ENCODE measurements at regions of chr1 and their contacts with region 1.

Region 1: GRCh38 chr1:154974063-154974807 is at the start of gene CKS1B:
- DNase-seq: peak; percentile 100
- ATAC-seq: peak; percentile 83
- H3K4me3 ChIP-seq: peak within 1 kb of the TSS; percentile 67 to 84 (median 72)
- H3K27ac ChIP-seq: peak within 1 kb of the TSS; percentile 100
- H3K4me1 ChIP-seq: peaks cover 62% of the 10 kb centered on the region
- H3K27me3 ChIP-seq: no peaks in the 10 kb centered on the region; a peak in 1 of 5 replicates
- CTCF ChIP-seq: no peak
- EP300 ChIP-seq: peak; percentile 8 to 23; a peak in 1 of 4 replicates
- POLR2A ChIP-seq: peak in 1 of 2 experiments; percentile 72; a peak in 2 of 4 replicates
- RAD21 ChIP-seq: peak; percentile 30; the same call in 1 of the 2 replicates
- total RNA-seq, gene CKS1B: 217 and 268 TPM in 2 replicates

Region 2: GRCh38 chr1:154936555-154937084 is 37.6 kb before region 1 on chr1 and contains the start of gene PMVK:
- CTCF ChIA-PET with region 1: no interaction called
- POLR2A ChIA-PET with region 1: interaction called, 28 read pairs
- in situ Hi-C with region 1: no loop called
- intact Hi-C with region 1: no loop called
- DNase-seq: peak; percentile 88
- ATAC-seq: peak; percentile 69
- H3K4me3 ChIP-seq: peak within 1 kb of the TSS; percentile 57 to 77 (median 69)
- H3K27ac ChIP-seq: peak within 1 kb of the TSS; percentile 99
- H3K4me1 ChIP-seq: peaks cover 74% of the 10 kb centered on the region
- H3K27me3 ChIP-seq: no peaks in the 10 kb centered on the region
- CTCF ChIP-seq: peak; percentile 96
- EP300 ChIP-seq: no peak
- POLR2A ChIP-seq: peak; percentile 67 to 77
- RAD21 ChIP-seq: peak; percentile 68
- total RNA-seq, gene PMVK: 3.9 and 7.5 TPM in 2 replicates

Region 3: DNA sequence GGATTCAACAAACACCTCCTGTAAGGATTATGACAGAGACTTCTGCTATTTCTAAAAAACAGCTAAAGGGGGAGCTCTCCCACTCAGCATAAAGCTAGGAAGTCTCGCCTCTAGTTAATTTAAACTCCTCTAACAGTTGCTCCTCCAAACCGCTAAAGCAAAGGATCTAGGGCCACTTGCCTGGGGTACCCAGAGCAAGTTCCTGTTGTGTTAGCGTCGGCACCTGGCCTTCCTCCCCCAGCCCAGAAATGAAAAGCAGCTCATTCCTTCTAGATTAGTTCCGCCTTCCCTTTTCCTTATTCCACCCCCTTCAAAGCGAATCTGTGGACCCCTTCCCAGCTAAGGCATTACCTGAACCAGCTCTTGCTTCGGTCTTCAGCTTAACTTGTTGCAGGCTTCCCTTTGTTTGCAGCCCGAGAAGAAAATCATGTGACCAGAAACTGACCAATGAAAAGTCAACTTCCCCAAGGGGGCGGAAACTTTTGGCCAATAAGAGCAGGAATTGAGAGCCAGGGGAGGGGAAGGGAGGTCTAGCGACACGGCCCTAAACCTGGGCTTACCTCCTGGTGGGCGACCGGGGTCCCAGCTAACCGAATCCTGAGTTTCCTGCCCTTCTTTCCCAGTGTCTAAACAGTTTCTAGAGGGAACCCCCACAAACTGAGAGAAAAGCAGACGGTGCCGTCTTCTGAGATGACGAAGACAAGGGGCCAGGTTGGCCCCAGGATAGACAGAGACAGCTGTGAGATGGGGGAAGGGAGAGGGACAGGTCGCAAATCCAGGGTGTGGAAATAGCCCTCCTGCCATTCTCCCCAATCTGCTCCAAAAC is 18.3 kb before region 1 on chr1 and contains the start of gene PBXIP1:
- CTCF ChIA-PET with region 1: no interaction called
- POLR2A ChIA-PET with region 1: interaction called, 148 read pairs
- in situ Hi-C with region 1: no loop called
- intact Hi-C with region 1: loop called (anchors 2 kb)
- DNase-seq: peak; percentile 94
- ATAC-seq: peak; percentile 81
- H3K4me3 ChIP-seq: peak within 1 kb of the TSS; percentile 66 to 72 (median 69)
- H3K27ac ChIP-seq: peak within 1 kb of the TSS; percentile 96
- H3K4me1 ChIP-seq: peaks cover 55% of the 10 kb centered on the region
- H3K27me3 ChIP-seq: no peaks in the 10 kb centered on the region; a peak in 1 of 5 replicates
- CTCF ChIP-seq: 0 out of 2 replicates have a peak, but pooled peaks have one; percentile 1
- EP300 ChIP-seq: no peak
- POLR2A ChIP-seq: peak in 1 of 2 experiments; percentile 55; a peak in 2 of 4 replicates
- RAD21 ChIP-seq: 0 out of 2 replicates have a peak, but pooled peaks have one; percentile 13
- total RNA-seq, gene PBXIP1: 7.3 and 16.3 TPM in 2 replicates

Region 4: DNA sequence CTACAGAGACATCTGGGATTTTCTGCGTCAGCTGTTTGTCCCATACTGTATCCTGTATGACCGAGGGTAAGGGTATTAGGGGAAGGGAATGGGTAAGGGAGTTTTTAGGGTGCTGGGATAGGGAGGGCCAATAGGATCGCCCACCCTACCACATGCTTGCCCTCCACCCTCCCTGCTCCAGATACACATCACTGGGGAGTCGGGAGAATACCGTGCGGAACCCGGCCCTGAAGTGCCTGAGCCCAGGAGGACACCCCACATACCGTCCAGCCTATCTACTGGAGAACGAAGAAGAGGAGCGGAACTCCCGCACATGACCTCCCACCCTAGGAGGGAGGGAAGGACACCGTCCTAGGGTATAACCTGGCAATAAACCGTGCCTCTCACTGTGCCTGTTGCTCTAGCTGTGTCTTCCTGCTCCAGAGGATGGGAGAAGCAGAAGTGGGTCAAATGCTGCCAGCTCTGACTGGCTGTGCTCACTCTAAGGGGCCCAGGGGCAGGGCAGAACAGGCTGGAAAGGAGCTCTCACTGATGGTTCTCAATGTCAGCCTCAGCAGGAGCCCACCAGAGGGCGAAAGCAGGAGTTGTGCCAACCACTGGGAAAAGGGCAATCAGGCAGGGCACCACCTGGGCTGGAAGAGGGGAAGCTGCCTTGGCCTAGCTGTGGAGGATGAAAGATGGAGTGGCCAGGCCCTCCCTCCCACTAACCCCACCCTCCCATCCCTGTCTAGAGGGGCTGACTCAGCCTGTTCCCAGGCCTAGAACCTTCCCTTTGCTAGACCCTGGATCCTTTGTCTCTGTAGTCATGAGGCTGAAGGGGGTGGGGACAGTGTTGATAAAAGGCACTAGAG is 18.7 kb after region 1 on chr1:
- CTCF ChIA-PET with region 1: no interaction called
- POLR2A ChIA-PET with region 1: interaction called, 34 read pairs
- in situ Hi-C with region 1: no loop called
- intact Hi-C with region 1: no loop called
- DNase-seq: no peak
- ATAC-seq: peak; percentile 63
- H3K4me3 ChIP-seq: no peak overlapping the region
- H3K27ac ChIP-seq: no peak overlapping the region
- H3K4me1 ChIP-seq: peaks cover 17% of the 10 kb centered on the region
- H3K27me3 ChIP-seq: no peaks in the 10 kb centered on the region
- CTCF ChIP-seq: peak; percentile 47
- EP300 ChIP-seq: no peak
- POLR2A ChIP-seq: no peak
- RAD21 ChIP-seq: 0 out of 2 replicates have a peak, but pooled peaks have one; percentile 33

Region 5: GRCh38 chr1:155017041-155017945 is 43.1 kb after region 1 on chr1:
- CTCF ChIA-PET with region 1: interaction called, 3 read pairs
- POLR2A ChIA-PET with region 1: interaction called, 18 read pairs
- in situ Hi-C with region 1: no loop called
- intact Hi-C with region 1: loop called (anchors 1 kb)
- DNase-seq: peak; percentile 88
- ATAC-seq: peak; percentile 88
- H3K4me3 ChIP-seq: peak overlapping the region in 2 of 3 experiments; percentile 48 to 61; a peak in 5 of 6 replicates
- H3K27ac ChIP-seq: peak overlapping the region; percentile 74
- H3K4me1 ChIP-seq: peaks cover 43% of the 10 kb centered on the region
- H3K27me3 ChIP-seq: no peaks in the 10 kb centered on the region
- CTCF ChIP-seq: peak; percentile 99
- EP300 ChIP-seq: peak in 1 of 2 experiments; percentile 20; a peak in 1 of 4 replicates
- POLR2A ChIP-seq: peak in 1 of 2 experiments; percentile 42; a peak in 1 of 4 replicates
- RAD21 ChIP-seq: peak; percentile 99

Region 6: GRCh38 chr1:155063550-155064110 is 89.4 kb after region 1 on chr1 and contains the start of gene EFNA4:
- CTCF ChIA-PET with region 1: no interaction called
- POLR2A ChIA-PET with region 1: interaction called, 9 read pairs
- in situ Hi-C with region 1: no loop called
- intact Hi-C with region 1: loop called (anchors 2 kb)
- DNase-seq: peak; percentile 82
- ATAC-seq: peak; percentile 84
- H3K4me3 ChIP-seq: peak within 1 kb of the TSS; percentile 72 to 91 (median 83)
- H3K27ac ChIP-seq: peak within 1 kb of the TSS; percentile 92
- H3K4me1 ChIP-seq: peaks cover 32% of the 10 kb centered on the region
- H3K27me3 ChIP-seq: no peaks in the 10 kb centered on the region
- CTCF ChIP-seq: no peak; the same call in 1 of the 2 replicates
- EP300 ChIP-seq: no peak
- POLR2A ChIP-seq: peak; percentile 81 to 95
- RAD21 ChIP-seq: no peak
- total RNA-seq, gene EFNA4: 9.3 and 17.2 TPM in 2 replicates

Measured in HepG2 (cell line).